B cell (primary cell): ENCODE measurements at regions of chr12 and their contacts with region 1.

Region 1: DNA sequence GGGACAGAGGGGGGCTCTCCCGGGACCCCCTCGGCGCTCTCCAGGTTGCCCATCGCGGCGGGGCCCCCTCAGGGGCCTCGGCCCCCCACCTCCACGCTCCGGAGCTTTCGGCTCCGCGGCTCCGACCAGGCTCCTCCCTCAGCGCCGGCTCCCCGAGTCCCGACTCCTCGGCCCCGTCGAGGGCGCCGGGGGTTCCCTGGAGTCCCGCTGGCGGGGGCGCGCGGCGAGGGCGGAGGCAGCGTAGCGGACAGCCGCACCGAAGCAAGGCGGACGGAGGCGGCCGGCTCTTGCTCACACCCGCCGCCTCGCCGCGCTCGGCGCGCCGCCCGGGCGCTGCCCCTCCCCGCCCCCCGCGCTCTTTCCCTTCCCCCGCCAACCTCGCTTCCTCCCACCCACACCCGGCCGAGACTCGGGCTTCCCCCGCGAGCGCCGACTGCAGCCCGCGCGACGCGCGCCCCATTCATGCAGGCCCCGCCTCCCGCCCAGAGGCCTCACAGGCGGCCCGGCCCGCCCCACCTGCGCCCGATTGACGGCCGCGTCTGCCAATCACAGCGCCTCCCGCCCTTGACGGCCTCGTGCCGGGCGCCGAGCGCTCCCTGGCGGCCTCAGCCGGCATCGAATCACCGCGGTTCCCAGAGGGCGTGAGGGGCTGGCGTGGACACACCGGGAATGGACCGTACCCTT is at the start of gene FMNL3:
- DNase-seq: peak; percentile 99
- ATAC-seq: peak; percentile 92
- H3K4me3 ChIP-seq: peak within 1 kb of the TSS; percentile 47 to 89 (median 84)
- H3K4me3 Mint-ChIP-seq: peak within 1 kb of the TSS; percentile 97
- H3K27ac ChIP-seq: peak within 1 kb of the TSS; percentile 86 to 88
- H3K27ac Mint-ChIP-seq: peak within 1 kb of the TSS; percentile 94
- H3K4me1 ChIP-seq: peaks cover 34 to 49% of the 10 kb centered on the region in 2 donors
- H3K4me1 Mint-ChIP-seq: peaks cover 47% of the 10 kb centered on the region
- H3K27me3 ChIP-seq: peaks cover 0 to 4% (median 2%) of the 10 kb centered on the region in 4 experiments
- H3K27me3 Mint-ChIP-seq: peaks cover 4% of the 10 kb centered on the region
- CTCF ChIP-seq: peak; percentile 93
- total RNA-seq, gene FMNL3: 69.9 and 73.7 TPM in 2 replicates

Region 2: GRCh38 chr12:49553512-49554088 is 153.7 kb before region 1 on chr12:
- CTCF ChIA-PET with region 1: interaction called, 9 read pairs
- POLR2A ChIA-PET with region 1: no interaction called
- intact Hi-C with region 1: loop called (anchors 5 kb)
- DNase-seq: peak; percentile 63
- ATAC-seq: peak; percentile 51
- H3K4me3 ChIP-seq: no peak overlapping the region
- H3K4me3 Mint-ChIP-seq: no peak overlapping the region
- H3K27ac ChIP-seq: no peak overlapping the region
- H3K27ac Mint-ChIP-seq: no peak overlapping the region
- H3K4me1 ChIP-seq: peaks cover 7 to 9% of the 10 kb centered on the region in 2 donors
- H3K4me1 Mint-ChIP-seq: peaks cover 5% of the 10 kb centered on the region
- H3K27me3 ChIP-seq: peaks cover 0 to 17% (median 4%) of the 10 kb centered on the region in 4 experiments
- H3K27me3 Mint-ChIP-seq: peaks cover 7% of the 10 kb centered on the region
- CTCF ChIP-seq: peak; percentile 63

Region 3: DNA sequence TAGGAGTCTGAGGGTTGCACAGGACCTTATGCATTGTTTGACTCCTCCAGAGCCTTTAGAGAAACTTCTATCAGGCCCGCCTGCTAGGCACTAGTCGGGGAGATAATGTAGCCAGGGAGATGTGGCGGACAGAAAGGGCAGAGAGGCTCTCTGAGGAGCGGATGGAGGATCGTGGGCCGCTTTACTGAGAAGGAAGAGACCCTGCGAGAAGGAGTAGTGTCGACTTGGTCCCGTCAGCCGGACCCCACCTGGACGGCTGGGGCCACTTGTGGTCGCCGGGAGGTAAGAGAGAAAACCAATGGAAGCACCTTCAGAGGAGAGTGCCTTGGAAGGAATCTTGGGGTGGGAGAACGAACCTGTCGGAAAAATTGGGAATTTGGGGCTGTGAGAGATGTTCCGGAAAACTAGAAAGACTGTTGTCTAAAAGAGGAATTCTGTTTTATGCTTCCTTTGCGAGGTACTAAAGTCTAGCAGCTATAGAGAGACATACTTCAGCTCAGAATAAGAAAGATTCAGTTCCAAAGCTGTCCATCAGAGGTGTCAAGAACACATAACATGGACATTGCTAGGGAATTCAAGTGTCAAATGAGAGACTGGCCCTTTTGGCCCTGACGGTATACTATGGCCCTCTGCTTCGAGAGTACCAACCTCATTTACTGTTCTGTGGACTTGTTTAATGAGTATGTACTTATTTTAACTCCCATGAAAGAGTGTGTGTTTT is 138.7 kb before region 1 on chr12:
- CTCF ChIA-PET with region 1: no interaction called
- POLR2A ChIA-PET with region 1: no interaction called
- intact Hi-C with region 1: no loop called
- DNase-seq: no peak
- ATAC-seq: no peak
- H3K4me3 ChIP-seq: peak overlapping the region; percentile 62 to 98 (median 91)
- H3K4me3 Mint-ChIP-seq: peak overlapping the region; percentile 99
- H3K27ac ChIP-seq: peak overlapping the region in 1 of 2 donors; percentile 97
- H3K27ac Mint-ChIP-seq: peak overlapping the region; percentile 99
- H3K4me1 ChIP-seq: peaks cover 15 to 29% of the 10 kb centered on the region in 2 donors
- H3K4me1 Mint-ChIP-seq: peaks cover 28% of the 10 kb centered on the region
- H3K27me3 ChIP-seq: no peaks in the 10 kb centered on the region
- H3K27me3 Mint-ChIP-seq: no peaks in the 10 kb centered on the region
- CTCF ChIP-seq: no peak

Region 4: DNA sequence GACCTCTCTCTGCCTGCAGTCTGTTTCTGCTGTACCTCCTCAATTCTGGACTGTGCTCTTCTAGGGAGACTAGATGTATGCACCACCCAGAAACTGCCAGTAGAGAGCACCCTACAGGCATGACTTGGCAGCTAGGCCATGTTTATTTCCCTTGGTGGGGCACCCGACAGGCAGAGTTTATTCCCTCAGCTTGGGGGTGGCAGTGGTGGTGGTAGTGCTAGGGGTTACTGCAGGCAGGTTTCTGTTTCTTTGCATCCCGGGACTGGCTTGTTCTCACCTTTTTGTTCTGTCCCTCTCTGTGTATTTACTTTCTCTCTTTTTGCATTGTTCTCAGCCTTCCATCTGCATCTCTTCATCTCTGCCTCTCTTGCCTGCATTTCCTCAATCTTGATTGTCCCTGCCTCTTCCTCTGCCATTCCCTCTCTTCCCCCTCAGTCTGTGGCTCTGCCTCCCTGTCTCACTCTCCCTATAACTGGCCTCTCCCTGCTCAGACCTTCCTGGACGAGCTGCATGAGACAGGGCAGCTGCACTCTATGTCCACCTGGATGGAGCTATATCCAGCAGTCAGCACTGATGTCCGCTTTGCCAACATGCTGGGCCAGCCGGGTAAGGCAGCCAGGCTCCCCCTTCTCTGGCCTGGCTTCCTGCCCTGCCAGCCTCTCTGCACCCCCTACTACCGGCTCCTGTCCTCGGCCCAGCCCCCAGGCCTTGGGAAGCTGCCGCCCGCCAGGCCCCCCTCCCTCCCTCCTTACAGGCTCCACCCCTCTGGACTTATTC is 70.1 kb before region 1 on chr12:
- CTCF ChIA-PET with region 1: interaction called, 372 read pairs
- POLR2A ChIA-PET with region 1: interaction called, 7 read pairs
- intact Hi-C with region 1: loop called (anchors 2 kb)
- DNase-seq: peak; percentile 67
- ATAC-seq: peak; percentile 92
- H3K4me3 ChIP-seq: no peak overlapping the region
- H3K4me3 Mint-ChIP-seq: no peak overlapping the region
- H3K27ac ChIP-seq: no peak overlapping the region
- H3K27ac Mint-ChIP-seq: peak overlapping the region; percentile 67
- H3K4me1 ChIP-seq: peaks cover 13 to 18% of the 10 kb centered on the region in 2 donors
- H3K4me1 Mint-ChIP-seq: peaks cover 21% of the 10 kb centered on the region
- H3K27me3 ChIP-seq: no peaks in the 10 kb centered on the region
- H3K27me3 Mint-ChIP-seq: no peaks in the 10 kb centered on the region
- CTCF ChIP-seq: peak; percentile 77

Region 5: GRCh38 chr12:49662998-49663843 is 44.0 kb before region 1 on chr12:
- CTCF ChIA-PET with region 1: interaction called, 89 read pairs
- POLR2A ChIA-PET with region 1: interaction called, 10 read pairs
- intact Hi-C with region 1: loop called (anchors 1 kb)
- DNase-seq: peak; percentile 84
- ATAC-seq: peak; percentile 89
- H3K4me3 ChIP-seq: peak overlapping the region; percentile 0 to 65 (median 36)
- H3K4me3 Mint-ChIP-seq: peak overlapping the region; percentile 85
- H3K27ac ChIP-seq: peak overlapping the region; percentile 78 to 95
- H3K27ac Mint-ChIP-seq: peak overlapping the region; percentile 97
- H3K4me1 ChIP-seq: peaks cover 77 to 86% of the 10 kb centered on the region in 2 donors
- H3K4me1 Mint-ChIP-seq: peaks cover 82% of the 10 kb centered on the region
- H3K27me3 ChIP-seq: no peaks in the 10 kb centered on the region
- H3K27me3 Mint-ChIP-seq: no peaks in the 10 kb centered on the region
- CTCF ChIP-seq: no peak

Region 6: GRCh38 chr12:49687941-49688340 is 19.3 kb before region 1 on chr12:
- CTCF ChIA-PET with region 1: interaction called, 28 read pairs
- POLR2A ChIA-PET with region 1: no interaction called
- intact Hi-C with region 1: loop called (anchors 2 kb)
- DNase-seq: no peak
- ATAC-seq: no peak
- H3K4me3 ChIP-seq: no peak overlapping the region
- H3K4me3 Mint-ChIP-seq: no peak overlapping the region
- H3K27ac ChIP-seq: no peak overlapping the region
- H3K27ac Mint-ChIP-seq: no peak overlapping the region
- H3K4me1 ChIP-seq: peaks cover 51% of the 10 kb centered on the region in 2 donors
- H3K4me1 Mint-ChIP-seq: peaks cover 65% of the 10 kb centered on the region
- H3K27me3 ChIP-seq: no peaks in the 10 kb centered on the region
- H3K27me3 Mint-ChIP-seq: no peaks in the 10 kb centered on the region
- CTCF ChIP-seq: no peak